GM10248 (cell line): ENCODE measurements at regions of chr13 and their contacts with region 1.

Region 1: GRCh38 chr13:20828539-20829364 is 55.0 kb upstream of the EEF1AKMT1 start:
- DNase-seq: peak; percentile 44
- CTCF ChIP-seq: peak; percentile 76

Region 2: GRCh38 chr13:19993024-19993423 is 835.7 kb before region 1 on chr13:
- CTCF ChIA-PET with region 1: no interaction called
- POLR2A ChIA-PET with region 1: no interaction called
- DNase-seq: no peak
- CTCF ChIP-seq: no peak

Region 3: DNA sequence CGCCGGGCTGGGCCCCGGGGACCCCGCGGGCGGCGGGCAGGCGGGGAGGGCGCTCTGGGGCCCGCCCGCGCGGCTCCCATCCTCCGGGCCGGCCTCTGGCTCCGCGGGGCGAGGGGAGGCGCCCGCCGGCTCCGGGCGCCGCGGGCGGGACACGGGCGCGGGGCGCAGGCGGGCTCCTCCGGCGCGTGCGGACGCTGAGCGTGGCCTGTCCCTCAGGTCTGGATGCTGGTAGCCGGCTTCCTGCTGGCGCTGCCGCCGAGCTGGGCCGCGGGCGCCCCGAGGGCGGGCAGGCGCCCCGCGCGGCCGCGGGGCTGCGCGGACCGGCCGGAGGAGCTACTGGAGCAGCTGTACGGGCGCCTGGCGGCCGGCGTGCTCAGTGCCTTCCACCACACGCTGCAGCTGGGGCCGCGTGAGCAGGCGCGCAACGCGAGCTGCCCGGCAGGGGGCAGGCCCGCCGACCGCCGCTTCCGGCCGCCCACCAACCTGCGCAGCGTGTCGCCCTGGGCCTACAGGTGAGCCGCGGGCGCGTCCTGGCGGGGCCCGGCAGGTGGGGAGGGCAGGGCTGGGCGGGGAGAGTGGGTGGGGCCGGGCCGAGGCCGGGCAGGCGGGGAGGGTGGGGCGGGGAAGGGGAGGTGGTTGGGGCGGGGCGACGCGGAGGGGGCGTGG is 124.8 kb before region 1 on chr13:
- CTCF ChIA-PET with region 1: interaction called, 16 read pairs
- POLR2A ChIA-PET with region 1: no interaction called
- DNase-seq: peak; percentile 90
- CTCF ChIP-seq: peak; percentile 67

Region 4: GRCh38 chr13:20814224-20814910 is 14.4 kb before region 1 on chr13:
- CTCF ChIA-PET with region 1: interaction called, 61 read pairs
- POLR2A ChIA-PET with region 1: no interaction called
- DNase-seq: no peak
- CTCF ChIP-seq: no peak

Region 5: DNA sequence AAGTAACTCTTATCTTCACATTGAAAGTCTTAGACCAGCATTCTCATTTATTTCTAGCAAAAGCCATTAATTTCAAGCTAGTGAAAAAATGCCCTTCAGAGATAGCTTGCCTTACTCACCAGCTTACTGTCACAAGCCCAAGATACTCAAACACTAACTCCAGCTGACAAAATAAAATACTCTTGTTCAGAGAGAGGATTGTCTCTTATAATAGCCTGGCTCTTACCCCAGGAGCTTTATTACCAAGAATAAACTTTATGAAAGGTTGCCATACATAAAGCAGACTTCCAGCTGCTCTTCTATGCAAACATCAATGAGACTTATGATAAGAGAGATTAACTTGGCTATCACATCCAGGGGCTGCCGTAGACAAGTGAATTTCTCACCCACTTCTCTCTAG is 20.2 kb after region 1 on chr13:
- CTCF ChIA-PET with region 1: interaction called, 38 read pairs
- POLR2A ChIA-PET with region 1: no interaction called
- DNase-seq: no peak
- CTCF ChIP-seq: no peak

Region 6: DNA sequence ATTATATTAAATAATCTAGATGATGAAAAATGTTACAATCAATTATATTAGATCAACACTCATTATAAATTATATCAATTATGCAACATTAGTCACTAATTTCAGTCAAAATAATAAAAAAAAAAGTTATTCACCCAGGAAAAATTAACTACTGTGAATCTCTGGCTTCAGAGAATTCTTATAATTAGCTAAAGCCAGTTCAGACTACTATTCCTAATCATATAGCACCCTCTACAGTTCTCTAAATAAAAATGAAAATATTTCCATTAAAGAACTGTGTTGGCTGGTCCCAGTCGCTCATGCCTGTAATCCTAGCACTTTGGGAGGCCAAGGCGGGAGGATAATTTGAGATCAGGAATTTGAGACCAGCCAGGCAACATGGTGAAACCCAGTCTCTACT is 40.8 kb after region 1 on chr13:
- CTCF ChIA-PET with region 1: interaction called, 12 read pairs
- POLR2A ChIA-PET with region 1: no interaction called
- DNase-seq: no peak
- CTCF ChIP-seq: no peak